Heart right ventricle (tissue), 16 donors: ENCODE measurements at regions of chr9 and their contacts with region 1.

Region 1: GRCh38 chr9:112705768-112706427 is 12.0 kb downstream of the INIP start:
- DNase-seq: peak in 1 of 2 donors; percentile 19
- ATAC-seq: peak in 7 of 8 donors; percentile 55 to 70 (median 61)
- H3K4me3 ChIP-seq: no peak overlapping the region
- H3K27ac ChIP-seq: no peak overlapping the region
- H3K4me1 ChIP-seq: peaks cover 0 to 7% (median 1%) of the 10 kb centered on the region in 9 donors
- H3K27me3 ChIP-seq: no peaks in the 10 kb centered on the region
- CTCF ChIP-seq: peak in 7 of 9 donors; percentile 21 to 52 (median 45)

Region 2: DNA sequence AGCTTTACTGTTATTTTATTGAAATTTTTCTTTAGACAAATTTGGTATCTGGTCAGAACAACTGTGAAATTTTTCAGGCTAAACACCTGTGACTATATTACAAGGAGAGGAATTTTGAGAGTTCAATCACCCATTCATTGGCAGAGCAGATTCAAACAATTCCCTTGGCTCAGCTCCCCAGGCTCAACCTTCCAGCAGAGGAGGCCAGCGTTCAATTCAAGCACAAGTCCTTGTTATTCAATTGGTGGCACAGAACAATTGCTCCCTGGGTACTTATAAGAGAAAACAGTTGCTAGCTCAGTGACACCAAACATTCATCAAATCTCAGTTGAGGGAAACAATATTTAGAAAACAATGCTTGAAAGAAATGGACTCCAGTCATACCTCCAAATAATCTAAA is 614.1 kb before region 1 on chr9:
- intact Hi-C with region 1: loop called in 1 of 10 experiments (anchors 5 kb)
- DNase-seq: no peak
- ATAC-seq: peak in 2 of 8 donors; percentile 51 to 60
- H3K4me3 ChIP-seq: no peak overlapping the region
- H3K27ac ChIP-seq: no peak overlapping the region
- H3K4me1 ChIP-seq: peaks cover 0 to 28% (median 0%) of the 10 kb centered on the region in 9 donors
- H3K27me3 ChIP-seq: no peaks in the 10 kb centered on the region
- CTCF ChIP-seq: peak in 7 of 9 donors; percentile 28 to 55 (median 40)

Region 3: GRCh38 chr9:112443200-112443599 is 262.7 kb before region 1 on chr9:
- intact Hi-C with region 1: loop called in 3 of 10 experiments (anchors 10 kb)
- DNase-seq: no peak
- ATAC-seq: no peak
- H3K4me3 ChIP-seq: no peak overlapping the region
- H3K27ac ChIP-seq: no peak overlapping the region
- H3K4me1 ChIP-seq: peaks cover 0 to 11% (median 0%) of the 10 kb centered on the region in 9 donors
- H3K27me3 ChIP-seq: no peaks in the 10 kb centered on the region
- CTCF ChIP-seq: peak in 7 of 9 donors; percentile 12 to 55 (median 44)

Region 4: GRCh38 chr9:112465352-112465751 is 240.5 kb before region 1 on chr9:
- intact Hi-C with region 1: loop called in 3 of 10 experiments (anchors 5 to 10 kb)
- DNase-seq: no peak
- ATAC-seq: no peak
- H3K4me3 ChIP-seq: no peak overlapping the region
- H3K27ac ChIP-seq: no peak overlapping the region
- H3K4me1 ChIP-seq: no peaks in the 10 kb centered on the region
- H3K27me3 ChIP-seq: no peaks in the 10 kb centered on the region
- CTCF ChIP-seq: no peak

Region 5: DNA sequence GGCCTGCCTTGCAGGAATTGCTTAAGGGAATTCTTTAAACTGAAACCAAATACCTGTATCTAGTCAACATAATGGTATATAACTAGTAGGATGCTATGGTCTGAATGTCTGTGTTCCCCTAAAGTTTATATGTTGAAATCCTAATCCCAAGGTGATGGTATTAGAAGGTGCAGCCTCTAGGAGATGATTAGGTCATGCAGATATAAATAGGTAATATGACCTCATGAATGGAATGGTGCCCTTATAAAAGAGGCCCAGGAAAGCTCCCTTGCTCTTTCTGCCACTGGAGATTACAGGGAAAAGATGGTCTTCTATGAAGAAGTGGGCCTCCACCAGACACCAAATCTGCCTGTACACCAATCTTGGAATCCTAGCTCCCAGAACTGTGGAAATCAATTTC is 226.7 kb before region 1 on chr9:
- intact Hi-C with region 1: loop called in 3 of 10 experiments (anchors 5 to 10 kb)
- DNase-seq: no peak
- ATAC-seq: peak in 4 of 8 donors; percentile 50 to 79 (median 54)
- H3K4me3 ChIP-seq: no peak overlapping the region
- H3K27ac ChIP-seq: peak overlapping the region in 4 of 10 donors; percentile 12 to 44 (median 22)
- H3K4me1 ChIP-seq: peaks cover 0 to 6% (median 0%) of the 10 kb centered on the region in 9 donors
- H3K27me3 ChIP-seq: no peaks in the 10 kb centered on the region
- CTCF ChIP-seq: no peak

Region 6: GRCh38 chr9:112486221-112487007 is 219.5 kb before region 1 on chr9 and contains the start of gene KIAA1958:
- intact Hi-C with region 1: loop called in 2 of 10 experiments (anchors 5 to 10 kb)
- DNase-seq: peak; percentile 69 to 84
- ATAC-seq: peak; percentile 83 to 94 (median 92)
- H3K4me3 ChIP-seq: peak within 1 kb of the TSS; percentile 50 to 96 (median 82)
- H3K27ac ChIP-seq: peak within 1 kb of the TSS; percentile 47 to 80 (median 74)
- H3K4me1 ChIP-seq: peaks cover 0 to 26% (median 12%) of the 10 kb centered on the region in 9 donors
- H3K27me3 ChIP-seq: peaks cover 0 to 12% (median 0%) of the 10 kb centered on the region in 7 donors
- CTCF ChIP-seq: no peak
- total RNA-seq, gene KIAA1958: 3.0 to 7.7 (median 6.6) TPM